ENCODE measurements at regions of chr16 and their contacts with region 1.

Region 1: DNA sequence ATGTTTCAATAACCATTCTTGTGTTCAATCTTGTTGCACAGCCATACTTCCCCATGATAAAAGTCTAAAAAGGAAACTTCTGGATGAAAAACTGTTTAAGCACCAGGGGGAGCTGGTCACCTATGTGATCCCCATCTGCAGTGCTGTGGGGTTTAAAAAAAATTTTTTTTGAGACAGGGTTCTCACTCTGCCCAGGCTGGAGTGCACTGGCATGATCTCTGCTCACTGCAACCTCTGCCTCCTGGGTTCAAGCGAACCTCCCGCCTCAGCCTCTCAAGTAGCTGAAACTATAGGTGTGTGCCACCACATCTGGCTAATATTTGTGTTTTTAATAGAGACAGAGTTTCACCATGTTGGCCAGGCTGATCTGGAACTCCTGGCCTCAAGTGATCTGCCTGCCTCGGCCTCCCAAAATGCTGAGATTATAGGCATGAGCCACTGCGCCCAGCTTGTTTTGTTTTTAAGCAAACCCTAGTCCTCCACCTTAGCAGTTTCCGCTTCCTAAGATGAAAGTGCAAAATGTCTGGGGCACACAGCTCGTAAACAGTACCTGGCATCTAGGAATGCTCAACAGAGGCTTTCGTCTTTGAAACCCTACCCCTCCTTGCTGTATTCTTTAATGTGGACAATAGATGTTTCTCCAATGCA is 25.4 kb downstream of the DNAJA2 start:
- DNase-seq: peak; percentile 46
- H3K4me3 ChIP-seq: no peak overlapping the region
- H3K27ac ChIP-seq: no peak overlapping the region
- H3K4me1 ChIP-seq: no peaks in the 10 kb centered on the region
- H3K27me3 ChIP-seq: no peaks in the 10 kb centered on the region
- CTCF ChIP-seq: peak; percentile 28 to 50
- POLR2A ChIP-seq: no peak

Region 2: GRCh38 chr16:46982335-46982734 is 34.3 kb after region 1 on chr16:
- CTCF ChIA-PET with region 1: no interaction called
- POLR2A ChIA-PET with region 1: no interaction called
- dilution Hi-C with region 1: no loop called
- intact Hi-C with region 1: no loop called
- DNase-seq: no peak
- H3K4me3 ChIP-seq: no peak overlapping the region
- H3K27ac ChIP-seq: no peak overlapping the region
- H3K4me1 ChIP-seq: no peaks in the 10 kb centered on the region
- H3K27me3 ChIP-seq: peaks cover 2% of the 10 kb centered on the region in 2 experiments
- CTCF ChIP-seq: no peak
- POLR2A ChIP-seq: no peak

Region 3: GRCh38 chr16:48117217-48118105 is 1169.4 kb after region 1 on chr16:
- CTCF ChIA-PET with region 1: no interaction called
- POLR2A ChIA-PET with region 1: no interaction called
- dilution Hi-C with region 1: no loop called
- intact Hi-C with region 1: loop called (anchors 2 kb)
- DNase-seq: peak; percentile 37
- H3K4me3 ChIP-seq: no peak overlapping the region
- H3K27ac ChIP-seq: no peak overlapping the region
- H3K4me1 ChIP-seq: no peaks in the 10 kb centered on the region
- H3K27me3 ChIP-seq: no peaks in the 10 kb centered on the region
- CTCF ChIP-seq: peak; percentile 79 to 88
- POLR2A ChIP-seq: no peak